PC-9 (cell line): ENCODE measurements at regions of chr4 and their contacts with region 1.

Region 1: GRCh38 chr4:123477711-123478209 is 81.2 kb downstream of the SPRY1 start:
- DNase-seq: no peak
- H3K4me3 ChIP-seq: no peak overlapping the region
- H3K27ac ChIP-seq: peak overlapping the region; percentile 96; the same call in 1 of the 2 replicates
- H3K4me1 ChIP-seq: peaks cover 31% of the 10 kb centered on the region
- H3K27me3 ChIP-seq: no peaks in the 10 kb centered on the region
- CTCF ChIP-seq: no peak

Region 2: DNA sequence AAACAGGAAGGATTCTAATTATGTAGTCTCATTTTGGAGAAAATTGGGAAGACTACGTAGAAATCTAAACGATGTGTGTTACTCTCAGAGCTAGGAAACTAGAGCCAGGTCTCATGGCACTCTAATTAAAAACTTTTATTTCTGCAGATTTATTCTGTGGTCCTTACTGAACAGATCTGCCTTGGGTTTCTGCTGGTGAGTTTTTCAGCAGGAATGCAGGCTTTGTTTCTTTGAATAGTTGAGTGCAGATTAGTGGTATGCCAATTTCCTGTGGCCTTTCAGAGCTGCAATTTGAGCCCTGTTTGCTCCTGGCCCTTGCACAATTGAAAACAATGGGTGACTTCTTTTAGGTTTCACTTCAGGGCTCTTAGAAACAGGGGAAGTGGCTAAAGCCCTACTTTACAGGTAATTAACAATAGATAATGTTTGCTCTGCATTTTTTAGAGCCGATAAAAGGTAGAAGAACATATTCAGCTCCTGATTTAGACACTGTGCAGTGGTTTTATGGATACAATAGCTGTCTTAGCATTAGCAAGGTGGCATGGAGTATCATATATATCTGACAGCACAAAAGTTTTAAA is 59.3 kb before region 1 on chr4:
- CTCF ChIA-PET with region 1: no interaction called
- POLR2A ChIA-PET with region 1: no interaction called
- intact Hi-C with region 1: loop called (anchors 1 kb)
- DNase-seq: peak; percentile 70 to 99
- H3K4me3 ChIP-seq: peak overlapping the region; percentile 16; the same call in 1 of the 2 replicates
- H3K27ac ChIP-seq: peak overlapping the region; percentile 90
- H3K4me1 ChIP-seq: peaks cover 71% of the 10 kb centered on the region
- H3K27me3 ChIP-seq: no peaks in the 10 kb centered on the region
- CTCF ChIP-seq: no peak

Region 3: GRCh38 chr4:123505095-123506010 is 27.6 kb after region 1 on chr4:
- CTCF ChIA-PET with region 1: no interaction called
- POLR2A ChIA-PET with region 1: no interaction called
- intact Hi-C with region 1: loop called (anchors 1 kb)
- DNase-seq: peak; percentile 32 to 53
- H3K4me3 ChIP-seq: peak overlapping the region; percentile 64
- H3K27ac ChIP-seq: no peak overlapping the region
- H3K4me1 ChIP-seq: peaks cover 10% of the 10 kb centered on the region
- H3K27me3 ChIP-seq: no peaks in the 10 kb centered on the region
- CTCF ChIP-seq: no peak

Region 4: DNA sequence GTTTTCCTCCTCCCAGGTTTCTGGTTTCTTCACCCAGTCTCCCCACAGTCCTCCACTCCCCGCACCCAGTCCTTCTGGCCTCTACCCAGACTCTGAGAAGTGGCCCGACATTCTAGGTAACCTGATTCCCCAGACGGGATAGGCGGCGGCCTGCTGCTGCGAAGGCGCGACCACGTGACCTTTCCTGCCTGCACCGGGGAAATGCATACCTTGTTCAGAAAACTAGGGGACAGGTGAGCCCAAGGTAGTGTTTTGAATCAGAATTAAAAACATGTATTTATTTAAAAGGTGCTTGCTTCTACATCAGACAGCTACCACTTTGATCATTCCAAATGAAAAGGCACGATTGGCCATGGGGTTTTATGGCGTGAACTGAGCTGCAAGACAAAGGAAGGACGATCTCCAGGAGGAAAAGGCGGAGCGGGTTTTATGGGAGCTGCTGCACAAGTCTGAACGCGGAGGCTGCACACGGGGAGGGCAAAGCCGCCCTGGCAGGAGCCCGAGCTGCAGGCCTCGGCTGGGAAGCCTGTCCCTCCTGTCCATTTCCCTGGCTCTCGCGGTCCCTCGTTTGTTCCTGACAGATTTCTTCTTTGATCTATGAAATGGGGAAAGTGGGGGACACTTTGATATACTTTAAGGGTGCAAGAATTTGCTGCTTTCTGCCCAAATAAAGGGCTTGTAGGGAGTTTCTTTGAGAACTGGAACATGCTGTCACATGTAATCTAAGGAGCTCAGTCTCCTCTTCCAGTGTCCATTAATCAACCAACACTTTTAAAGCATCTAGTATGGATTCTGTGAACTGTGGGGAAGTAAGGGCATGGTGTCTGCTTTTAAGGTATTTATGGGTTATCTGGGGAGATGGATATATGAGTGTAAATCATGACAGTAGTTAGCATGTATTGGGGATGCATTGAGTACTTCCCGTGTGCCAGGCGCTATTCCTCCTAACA is 69.7 kb after region 1 on chr4:
- CTCF ChIA-PET with region 1: no interaction called
- POLR2A ChIA-PET with region 1: no interaction called
- intact Hi-C with region 1: loop called (anchors 2 kb)
- DNase-seq: peak; percentile 86 to 93
- H3K4me3 ChIP-seq: peak overlapping the region; percentile 20; the same call in 1 of the 2 replicates
- H3K27ac ChIP-seq: peak overlapping the region; percentile 47
- H3K4me1 ChIP-seq: peaks cover 30% of the 10 kb centered on the region
- H3K27me3 ChIP-seq: no peaks in the 10 kb centered on the region
- CTCF ChIP-seq: no peak

Region 5: GRCh38 chr4:123555233-123555806 is 77.6 kb after region 1 on chr4:
- CTCF ChIA-PET with region 1: no interaction called
- POLR2A ChIA-PET with region 1: no interaction called
- intact Hi-C with region 1: loop called (anchors 2 kb)
- DNase-seq: peak; percentile 86 to 90
- H3K4me3 ChIP-seq: no peak overlapping the region
- H3K27ac ChIP-seq: peak overlapping the region; percentile 67
- H3K4me1 ChIP-seq: peaks cover 38% of the 10 kb centered on the region
- H3K27me3 ChIP-seq: no peaks in the 10 kb centered on the region
- CTCF ChIP-seq: no peak

Region 6: DNA sequence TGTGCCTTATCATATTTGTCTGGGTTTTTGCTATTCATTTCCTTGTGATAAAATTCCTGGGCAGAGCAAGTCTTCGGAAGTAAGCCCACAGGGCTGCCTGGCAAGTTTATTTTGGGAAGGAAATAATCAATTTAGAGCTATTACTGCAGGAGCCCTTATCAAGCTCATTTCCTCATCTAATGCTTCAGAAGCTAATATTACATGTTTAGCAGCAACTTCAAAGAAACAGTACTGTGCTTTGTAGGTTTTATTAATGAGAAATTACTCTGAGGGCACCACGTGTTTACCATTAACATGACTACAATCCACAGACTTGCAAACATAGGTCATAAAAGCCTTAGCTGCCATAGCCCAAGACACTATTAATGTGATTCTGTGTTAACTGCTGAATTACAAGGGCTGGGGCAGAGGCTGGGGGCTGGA is 458.9 kb after region 1 on chr4:
- CTCF ChIA-PET with region 1: no interaction called
- POLR2A ChIA-PET with region 1: no interaction called
- intact Hi-C with region 1: no loop called
- DNase-seq: no peak
- H3K4me3 ChIP-seq: no peak overlapping the region
- H3K27ac ChIP-seq: no peak overlapping the region
- H3K4me1 ChIP-seq: no peaks in the 10 kb centered on the region
- H3K27me3 ChIP-seq: no peaks in the 10 kb centered on the region
- CTCF ChIP-seq: no peak